ENCODE measurements at regions of chr3 and their contacts with region 1.

Region 1: DNA sequence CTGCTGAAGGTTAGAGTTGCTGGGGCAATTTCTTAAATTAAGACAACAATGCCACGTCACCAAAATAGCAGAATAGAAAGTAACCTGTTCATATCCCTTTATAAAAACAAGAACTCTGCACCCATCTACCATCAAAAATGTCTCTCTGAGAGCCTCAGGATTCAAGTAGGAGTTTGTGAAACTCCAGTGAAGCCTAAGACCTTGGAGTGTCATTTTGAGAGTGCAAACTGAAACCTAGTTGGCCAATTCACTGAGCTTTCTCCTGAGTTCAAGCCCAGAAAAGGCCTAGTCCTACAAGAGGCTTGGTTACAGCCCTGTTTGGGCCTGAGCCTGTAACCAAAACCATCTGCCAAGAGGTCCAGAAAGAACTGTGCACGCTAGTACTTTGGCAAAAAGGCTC is 335.1 kb downstream of the EFHB start:
- DNase-seq: no peak
- ATAC-seq: no peak
- H3K4me3 ChIP-seq: no peak overlapping the region
- H3K4me3 Mint-ChIP-seq: no peak overlapping the region
- H3K27ac ChIP-seq: no peak overlapping the region
- H3K27ac Mint-ChIP-seq: no peak overlapping the region
- H3K4me1 ChIP-seq: no peaks in the 10 kb centered on the region
- H3K4me1 Mint-ChIP-seq: no peaks in the 10 kb centered on the region
- H3K27me3 ChIP-seq: no peaks in the 10 kb centered on the region
- H3K27me3 Mint-ChIP-seq: peaks cover 3% of the 10 kb centered on the region
- CTCF ChIP-seq: no peak

Region 2: DNA sequence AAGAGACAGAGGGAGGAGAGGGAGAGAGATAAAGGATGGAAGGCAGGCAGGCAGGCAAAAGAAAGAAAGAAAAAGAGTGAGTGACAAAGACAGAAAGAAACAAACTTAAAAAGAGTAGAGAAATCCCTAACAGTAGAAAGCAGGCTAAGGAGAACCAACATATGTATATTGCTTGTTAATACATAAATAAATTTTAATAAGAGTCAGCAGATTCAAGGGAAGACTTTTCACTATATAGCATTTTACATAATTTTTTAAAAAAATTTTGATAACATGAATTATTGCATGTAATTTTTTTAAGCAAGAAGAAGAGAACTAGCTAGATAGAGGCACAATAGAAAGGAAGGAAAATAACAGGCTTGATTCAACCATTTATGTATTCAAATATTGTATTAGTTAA is 158.9 kb before region 1 on chr3:
- CTCF ChIA-PET with region 1: no interaction called
- POLR2A ChIA-PET with region 1: no interaction called
- intact Hi-C with region 1: loop called in 1 of 2 experiments (anchors 2 kb)
- DNase-seq: no peak
- ATAC-seq: no peak
- H3K4me3 ChIP-seq: no peak overlapping the region
- H3K4me3 Mint-ChIP-seq: no peak overlapping the region
- H3K27ac ChIP-seq: no peak overlapping the region
- H3K27ac Mint-ChIP-seq: no peak overlapping the region
- H3K4me1 ChIP-seq: no peaks in the 10 kb centered on the region
- H3K4me1 Mint-ChIP-seq: no peaks in the 10 kb centered on the region
- H3K27me3 ChIP-seq: no peaks in the 10 kb centered on the region
- H3K27me3 Mint-ChIP-seq: no peaks in the 10 kb centered on the region
- CTCF ChIP-seq: no peak

Measured in CD8-positive, alpha-beta T cell (primary cell).